ENCODE measurements at regions of chr13 and their contacts with region 1.

Region 1: DNA sequence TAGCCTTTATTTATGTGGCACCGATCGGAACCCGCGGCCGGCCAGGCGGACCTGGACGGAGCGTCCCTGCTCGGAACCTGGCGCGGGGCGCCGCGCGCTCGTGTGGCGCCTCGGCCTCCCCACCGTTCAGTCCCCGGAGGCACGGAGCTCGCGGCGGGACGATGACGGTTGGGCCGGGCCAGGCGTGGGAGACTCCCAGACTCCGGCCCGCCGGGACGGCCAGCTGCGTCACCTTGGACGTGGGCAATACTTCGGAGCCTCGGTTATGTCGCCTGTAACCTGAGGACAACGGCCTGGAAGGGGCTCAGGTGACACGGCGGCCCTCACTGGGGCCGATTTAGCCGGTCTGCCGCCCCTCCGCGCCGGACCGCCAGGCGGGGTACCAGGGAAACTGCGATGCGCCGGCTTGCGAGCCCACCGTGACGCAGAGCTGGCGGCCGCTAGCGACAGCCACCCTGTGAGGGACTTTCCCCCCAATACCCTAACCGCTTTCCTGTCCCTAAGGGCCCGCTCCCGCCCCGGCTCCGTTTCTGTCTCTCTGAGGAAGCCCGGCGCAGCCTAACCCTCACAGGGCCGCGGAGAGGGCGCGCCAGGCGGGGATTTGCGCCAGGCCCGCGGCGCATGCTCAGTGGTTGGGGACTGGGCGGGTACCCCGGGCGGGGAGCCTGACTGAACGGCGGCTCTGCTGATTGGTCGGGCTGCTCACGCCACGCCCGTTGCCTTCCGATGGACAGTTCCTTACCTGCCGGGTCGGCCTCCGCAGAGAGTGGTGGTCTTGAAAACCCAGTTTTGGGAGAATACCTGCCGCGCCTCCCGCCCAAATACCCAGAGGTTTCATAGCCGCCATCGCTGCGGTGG is 109.5 kb upstream of the DOCK9 start:
- DNase-seq: peak; percentile 87 to 96 (median 93)
- ATAC-seq: peak; percentile 73
- H3K4me3 ChIP-seq: peak overlapping the region; percentile 70
- H3K4me3 Mint-ChIP-seq: peak overlapping the region; percentile 97
- H3K27ac ChIP-seq: peak overlapping the region; percentile 87 to 99
- H3K27ac Mint-ChIP-seq: peak overlapping the region; percentile 99
- H3K4me1 ChIP-seq: peaks cover 43% of the 10 kb centered on the region
- H3K4me1 Mint-ChIP-seq: peaks cover 48% of the 10 kb centered on the region
- H3K27me3 ChIP-seq: no peaks in the 10 kb centered on the region
- H3K27me3 Mint-ChIP-seq: no peaks in the 10 kb centered on the region
- CTCF ChIP-seq: peak; percentile 30

Region 2: GRCh38 chr13:98998831-98999638 is 88.3 kb before region 1 on chr13:
- CTCF ChIA-PET with region 1: no interaction called
- POLR2A ChIA-PET with region 1: interaction called, 5 read pairs
- intact Hi-C with region 1: loop called (anchors 1 to 5 kb)
- DNase-seq: peak in 10 of 14 experiments; percentile 9 to 73 (median 29)
- ATAC-seq: peak; percentile 71
- H3K4me3 ChIP-seq: no peak overlapping the region
- H3K4me3 Mint-ChIP-seq: peak overlapping the region; percentile 85
- H3K27ac ChIP-seq: peak overlapping the region in 1 of 2 donors; percentile 14
- H3K27ac Mint-ChIP-seq: peak overlapping the region; percentile 94
- H3K4me1 ChIP-seq: peaks cover 81% of the 10 kb centered on the region
- H3K4me1 Mint-ChIP-seq: peaks cover 99% of the 10 kb centered on the region
- H3K27me3 ChIP-seq: no peaks in the 10 kb centered on the region
- H3K27me3 Mint-ChIP-seq: no peaks in the 10 kb centered on the region
- CTCF ChIP-seq: no peak

Region 3: GRCh38 chr13:99041788-99042187 is 45.5 kb before region 1 on chr13:
- CTCF ChIA-PET with region 1: interaction called, 9 read pairs
- POLR2A ChIA-PET with region 1: interaction called, 74 read pairs
- intact Hi-C with region 1: loop called in 1 of 2 experiments (anchors 2 kb)
- DNase-seq: no peak
- ATAC-seq: no peak
- H3K4me3 ChIP-seq: no peak overlapping the region
- H3K4me3 Mint-ChIP-seq: no peak overlapping the region
- H3K27ac ChIP-seq: peak overlapping the region in 1 of 2 donors; percentile 26
- H3K27ac Mint-ChIP-seq: peak overlapping the region; percentile 95
- H3K4me1 ChIP-seq: peaks cover 64% of the 10 kb centered on the region
- H3K4me1 Mint-ChIP-seq: peaks cover 87% of the 10 kb centered on the region
- H3K27me3 ChIP-seq: no peaks in the 10 kb centered on the region
- H3K27me3 Mint-ChIP-seq: no peaks in the 10 kb centered on the region
- CTCF ChIP-seq: no peak

Region 4: GRCh38 chr13:99057310-99057975 is 29.9 kb before region 1 on chr13:
- CTCF ChIA-PET with region 1: no interaction called
- POLR2A ChIA-PET with region 1: interaction called, 113 read pairs
- intact Hi-C with region 1: loop called in 1 of 2 experiments (anchors 2 kb)
- DNase-seq: no peak
- ATAC-seq: no peak
- H3K4me3 ChIP-seq: no peak overlapping the region
- H3K4me3 Mint-ChIP-seq: no peak overlapping the region
- H3K27ac ChIP-seq: no peak overlapping the region
- H3K27ac Mint-ChIP-seq: peak overlapping the region; percentile 55
- H3K4me1 ChIP-seq: peaks cover 62% of the 10 kb centered on the region
- H3K4me1 Mint-ChIP-seq: peaks cover 93% of the 10 kb centered on the region
- H3K27me3 ChIP-seq: no peaks in the 10 kb centered on the region
- H3K27me3 Mint-ChIP-seq: no peaks in the 10 kb centered on the region
- CTCF ChIP-seq: no peak

Region 5: DNA sequence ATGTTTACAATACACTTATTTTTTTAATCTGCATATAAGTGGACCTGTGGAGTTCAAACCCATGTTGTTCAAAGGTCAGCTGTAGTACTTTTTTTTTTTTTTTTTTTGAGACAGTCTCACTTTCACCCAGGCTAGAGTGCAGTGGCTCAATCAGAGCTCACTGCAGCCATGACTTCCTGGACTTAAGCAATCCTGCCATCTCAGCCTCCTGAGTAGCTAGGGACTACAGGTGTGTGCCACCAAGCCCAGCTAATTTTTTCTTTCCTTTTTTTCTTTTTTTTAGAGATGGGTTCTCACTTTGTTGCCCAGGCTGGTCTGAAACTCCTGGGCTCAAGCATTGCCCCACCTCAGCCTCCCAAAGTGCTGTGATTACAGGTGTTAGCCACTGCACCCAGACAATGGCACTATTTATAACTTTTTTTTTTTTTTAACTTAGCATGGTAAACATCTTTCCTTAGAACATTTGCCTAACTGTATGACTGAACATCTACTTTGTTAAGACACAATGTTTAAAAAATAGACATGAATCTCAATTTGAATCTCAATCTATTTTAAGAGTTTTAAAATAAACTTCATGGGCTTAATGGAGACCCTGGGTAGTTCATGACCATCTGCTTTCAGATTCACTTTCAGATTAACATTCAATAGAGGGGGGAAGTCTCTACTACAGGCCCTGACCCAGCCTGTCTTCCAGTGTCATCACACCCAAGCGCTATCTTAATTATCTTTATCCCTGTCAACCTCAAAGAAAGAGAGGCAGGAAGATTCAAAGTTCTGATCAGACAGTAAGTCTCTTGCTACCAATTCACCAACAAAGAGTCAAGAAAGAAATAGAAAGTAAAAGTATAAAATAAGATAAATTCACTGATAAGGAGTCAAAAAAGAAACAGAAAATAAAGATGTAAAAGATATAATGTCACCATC is 11.8 kb before region 1 on chr13:
- CTCF ChIA-PET with region 1: no interaction called
- POLR2A ChIA-PET with region 1: interaction called, 13 read pairs
- intact Hi-C with region 1: no loop called
- DNase-seq: peak in 3 of 14 experiments; percentile 58 to 81 (median 62)
- ATAC-seq: peak; percentile 76
- H3K4me3 ChIP-seq: peak overlapping the region; percentile 24
- H3K4me3 Mint-ChIP-seq: peak overlapping the region; percentile 18
- H3K27ac ChIP-seq: peak overlapping the region; percentile 37 to 61
- H3K27ac Mint-ChIP-seq: peak overlapping the region; percentile 84
- H3K4me1 ChIP-seq: peaks cover 45% of the 10 kb centered on the region
- H3K4me1 Mint-ChIP-seq: peaks cover 92% of the 10 kb centered on the region
- H3K27me3 ChIP-seq: no peaks in the 10 kb centered on the region
- H3K27me3 Mint-ChIP-seq: no peaks in the 10 kb centered on the region
- CTCF ChIP-seq: no peak

Region 6: GRCh38 chr13:99258210-99258860 is 171.0 kb after region 1 on chr13 and contains the start of gene GPR18:
- CTCF ChIA-PET with region 1: no interaction called
- POLR2A ChIA-PET with region 1: interaction called, 8 read pairs
- intact Hi-C with region 1: loop called in 1 of 2 experiments (anchors 10 kb)
- DNase-seq: peak in 6 of 14 experiments; percentile 27 to 88 (median 66)
- ATAC-seq: peak; percentile 75
- H3K4me3 ChIP-seq: peak within 1 kb of the TSS; percentile 69
- H3K4me3 Mint-ChIP-seq: peak within 1 kb of the TSS; percentile 94
- H3K27ac ChIP-seq: peak within 1 kb of the TSS; percentile 70 to 78
- H3K27ac Mint-ChIP-seq: peak within 1 kb of the TSS; percentile 92
- H3K4me1 ChIP-seq: peaks cover 22% of the 10 kb centered on the region
- H3K4me1 Mint-ChIP-seq: peaks cover 83% of the 10 kb centered on the region
- H3K27me3 ChIP-seq: no peaks in the 10 kb centered on the region
- H3K27me3 Mint-ChIP-seq: no peaks in the 10 kb centered on the region
- CTCF ChIP-seq: no peak
- total RNA-seq, gene GPR18: 42.9 to 45.1 TPM